T-cell (primary cell): ENCODE measurements at regions of chr16 and their contacts with region 1.

Region 1: DNA sequence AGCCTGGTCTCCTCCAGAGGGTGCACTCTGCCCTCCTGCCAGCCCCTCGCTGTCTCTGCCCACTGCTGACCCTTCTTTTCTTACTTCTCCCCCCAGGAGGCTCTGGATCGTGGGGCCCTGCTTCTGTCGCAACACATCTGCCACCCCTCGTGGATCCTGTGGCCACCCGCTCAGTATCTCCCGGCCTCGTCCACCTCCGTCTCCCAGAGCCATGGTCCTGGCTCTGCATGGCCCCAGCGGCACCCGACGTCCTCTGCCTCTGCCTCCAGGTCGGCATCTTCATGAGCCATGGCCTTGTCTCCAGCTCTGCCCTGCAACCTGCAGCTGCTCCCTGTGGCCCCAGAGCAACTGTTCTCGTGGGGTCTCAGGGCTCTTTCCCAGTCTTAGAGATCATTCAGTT is 12.1 kb upstream of the ACSF3 start:
- DNase-seq: no peak
- ATAC-seq: no peak
- H3K4me3 ChIP-seq: no peak overlapping the region
- H3K4me3 Mint-ChIP-seq: no peak overlapping the region
- H3K27ac ChIP-seq: no peak overlapping the region
- H3K27ac Mint-ChIP-seq: no peak overlapping the region
- H3K4me1 ChIP-seq: no peaks in the 10 kb centered on the region
- H3K4me1 Mint-ChIP-seq: peaks cover 0 to 8% (median 8%) of the 10 kb centered on the region in 3 donors
- H3K27me3 ChIP-seq: peaks cover 0 to 5% of the 10 kb centered on the region in 2 experiments
- H3K27me3 Mint-ChIP-seq: peaks cover 0 to 2% of the 10 kb centered on the region in 2 donors

Region 2: GRCh38 chr16:89155184-89155679 is 73.7 kb after region 1 on chr16:
- CTCF ChIA-PET with region 1: no interaction called
- POLR2A ChIA-PET with region 1: no interaction called
- DNase-seq: no peak
- ATAC-seq: no peak
- H3K4me3 ChIP-seq: no peak overlapping the region
- H3K4me3 Mint-ChIP-seq: no peak overlapping the region
- H3K27ac ChIP-seq: no peak overlapping the region
- H3K27ac Mint-ChIP-seq: no peak overlapping the region
- H3K4me1 ChIP-seq: peaks cover 0 to 9% of the 10 kb centered on the region in 2 experiments
- H3K4me1 Mint-ChIP-seq: peaks cover 0 to 2% (median 0%) of the 10 kb centered on the region in 3 donors
- H3K27me3 ChIP-seq: peaks cover 0 to 2% of the 10 kb centered on the region in 2 experiments
- H3K27me3 Mint-ChIP-seq: no peaks in the 10 kb centered on the region

Region 3: GRCh38 chr16:89209577-89209976 is 128.0 kb after region 1 on chr16:
- CTCF ChIA-PET with region 1: no interaction called
- POLR2A ChIA-PET with region 1: interaction called in 1 of 2 experiments, 10 read pairs
- DNase-seq: no peak
- ATAC-seq: no peak
- H3K4me3 ChIP-seq: no peak overlapping the region
- H3K4me3 Mint-ChIP-seq: no peak overlapping the region
- H3K27ac ChIP-seq: no peak overlapping the region
- H3K27ac Mint-ChIP-seq: no peak overlapping the region
- H3K4me1 ChIP-seq: no peaks in the 10 kb centered on the region
- H3K4me1 Mint-ChIP-seq: peaks cover 0 to 4% (median 2%) of the 10 kb centered on the region in 3 donors
- H3K27me3 ChIP-seq: peaks cover 0 to 52% of the 10 kb centered on the region in 2 experiments
- H3K27me3 Mint-ChIP-seq: peaks cover 9 to 45% of the 10 kb centered on the region in 2 donors